Activated T-helper 2 cell treated with anti-CD3 and anti-CD28 coated beads, Interferon-gamma antibody, Interleukin-2, Interleukin-4, amounts not matched to agents 10 μg/mL and 5 μg/mL and 100 μg/mL, durations not matched to agents 14 hours and 24 hours and 36 hours (primary cell): ENCODE measurements at regions of chr16 and their contacts with region 1.

Region 1: GRCh38 chr16:81403616-81404373 is 40.8 kb upstream of the CMIP start:
- DNase-seq: peak; percentile 71
- H3K4me3 Mint-ChIP-seq: no peak overlapping the region
- H3K27ac Mint-ChIP-seq: no peak overlapping the region
- H3K4me1 Mint-ChIP-seq: peaks cover 2% of the 10 kb centered on the region
- H3K27me3 Mint-ChIP-seq: peaks cover 8% of the 10 kb centered on the region

Region 2: GRCh38 chr16:81366316-81366932 is 37.4 kb before region 1 on chr16:
- intact Hi-C with region 1: loop called (anchors 5 kb)
- DNase-seq: no peak
- H3K4me3 Mint-ChIP-seq: no peak overlapping the region
- H3K27ac Mint-ChIP-seq: no peak overlapping the region
- H3K4me1 Mint-ChIP-seq: peaks cover 7% of the 10 kb centered on the region
- H3K27me3 Mint-ChIP-seq: no peaks in the 10 kb centered on the region

Region 3: GRCh38 chr16:81385031-81385756 is 18.6 kb before region 1 on chr16:
- intact Hi-C with region 1: no loop called
- DNase-seq: no peak
- H3K4me3 Mint-ChIP-seq: no peak overlapping the region
- H3K27ac Mint-ChIP-seq: no peak overlapping the region
- H3K4me1 Mint-ChIP-seq: peaks cover 3% of the 10 kb centered on the region
- H3K27me3 Mint-ChIP-seq: no peaks in the 10 kb centered on the region

Region 4: GRCh38 chr16:81696961-81697615 is 293.3 kb after region 1 on chr16:
- intact Hi-C with region 1: loop called (anchors 10 kb)
- DNase-seq: peak; percentile 37
- H3K4me3 Mint-ChIP-seq: no peak overlapping the region
- H3K27ac Mint-ChIP-seq: peak overlapping the region; percentile 63
- H3K4me1 Mint-ChIP-seq: peaks cover 13% of the 10 kb centered on the region
- H3K27me3 Mint-ChIP-seq: no peaks in the 10 kb centered on the region

Region 5: DNA sequence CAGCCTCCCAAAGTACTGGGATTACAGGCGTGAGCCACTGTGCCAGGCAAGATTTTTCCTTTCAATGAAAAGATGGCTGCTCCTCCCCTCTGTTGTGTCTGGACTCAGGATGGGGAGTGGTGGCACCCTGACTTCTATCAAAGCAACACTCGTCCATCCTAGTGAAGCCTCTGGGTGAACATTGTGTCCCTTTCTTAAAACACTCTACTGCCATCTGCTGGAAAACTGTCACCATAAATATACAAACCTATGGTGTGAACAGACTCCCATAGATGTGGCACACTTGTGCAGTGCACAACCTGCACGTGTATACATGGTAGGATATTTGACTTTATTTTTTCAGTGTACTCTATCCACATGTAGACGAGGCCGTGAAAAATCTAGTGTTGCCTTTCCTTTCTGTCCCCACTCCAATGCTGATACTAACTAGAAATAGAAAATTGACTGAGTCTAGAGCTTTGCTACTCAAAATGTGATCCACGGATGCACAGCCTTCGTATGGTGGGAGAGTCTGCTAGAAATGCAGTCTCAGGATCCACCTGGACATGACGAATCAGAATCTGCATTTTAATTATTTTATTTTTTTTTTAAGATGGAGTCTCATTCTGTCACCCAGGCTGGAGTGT is 319.4 kb after region 1 on chr16:
- intact Hi-C with region 1: loop called (anchors 1 kb)
- DNase-seq: peak; percentile 23
- H3K4me3 Mint-ChIP-seq: no peak overlapping the region
- H3K27ac Mint-ChIP-seq: no peak overlapping the region
- H3K4me1 Mint-ChIP-seq: peaks cover 6% of the 10 kb centered on the region
- H3K27me3 Mint-ChIP-seq: peaks cover 4% of the 10 kb centered on the region